Natural killer cell (primary cell): ENCODE measurements at regions of chr6 and their contacts with region 1.

Region 1: GRCh38 chr6:88780714-88781389 is 182.6 kb downstream of the RNGTT start:
- DNase-seq: peak in 1 of 2 donors; percentile 81
- ATAC-seq: peak; percentile 86 to 96 (median 89)
- H3K4me3 ChIP-seq: no peak overlapping the region
- H3K4me3 Mint-ChIP-seq: no peak overlapping the region
- H3K27ac ChIP-seq: no peak overlapping the region
- H3K27ac Mint-ChIP-seq: no peak overlapping the region
- H3K4me1 ChIP-seq: no peaks in the 10 kb centered on the region
- H3K4me1 Mint-ChIP-seq: peaks cover 5% of the 10 kb centered on the region in 2 donors
- H3K27me3 ChIP-seq: no peaks in the 10 kb centered on the region
- H3K27me3 Mint-ChIP-seq: no peaks in the 10 kb centered on the region
- CTCF ChIP-seq: peak; percentile 86

Region 2: DNA sequence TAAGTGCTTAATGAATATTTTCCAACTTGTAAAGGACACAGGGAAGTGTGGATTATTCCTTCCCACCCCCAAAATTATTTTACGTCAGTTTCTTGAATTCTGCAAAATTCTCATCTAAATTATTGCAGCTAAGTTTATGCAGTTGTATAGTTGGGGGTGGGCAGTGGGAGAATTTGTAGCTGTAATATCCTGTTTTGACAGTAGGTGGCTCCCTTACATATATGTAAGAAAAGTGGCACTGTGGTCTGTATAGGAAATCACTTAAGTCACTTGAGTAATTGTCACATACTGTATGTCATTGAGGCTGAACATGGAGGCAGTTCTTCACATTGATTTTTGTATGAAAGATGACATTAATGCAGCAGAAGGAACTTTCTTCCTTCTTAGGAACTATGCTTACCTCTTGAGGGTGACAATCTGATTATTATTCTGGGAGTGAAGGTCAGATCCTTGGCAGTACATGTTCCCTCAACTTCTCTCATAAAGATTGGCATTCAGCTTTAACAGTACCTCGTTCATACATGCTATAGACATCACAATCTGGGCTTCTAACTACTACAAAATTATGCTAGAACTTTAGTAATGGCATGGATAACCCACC is 1387.7 kb before region 1 on chr6:
- intact Hi-C with region 1: loop called (anchors 2 kb)
- DNase-seq: peak; percentile 20 to 83
- ATAC-seq: peak; percentile 94 to 100 (median 100)
- H3K4me3 ChIP-seq: no peak overlapping the region
- H3K4me3 Mint-ChIP-seq: no peak overlapping the region
- H3K27ac ChIP-seq: no peak overlapping the region
- H3K27ac Mint-ChIP-seq: peak overlapping the region in 1 of 2 donors; percentile 45
- H3K4me1 ChIP-seq: no peaks in the 10 kb centered on the region
- H3K4me1 Mint-ChIP-seq: peaks cover 5% of the 10 kb centered on the region in 2 donors
- H3K27me3 ChIP-seq: no peaks in the 10 kb centered on the region
- H3K27me3 Mint-ChIP-seq: no peaks in the 10 kb centered on the region
- CTCF ChIP-seq: peak; percentile 72

Region 3: DNA sequence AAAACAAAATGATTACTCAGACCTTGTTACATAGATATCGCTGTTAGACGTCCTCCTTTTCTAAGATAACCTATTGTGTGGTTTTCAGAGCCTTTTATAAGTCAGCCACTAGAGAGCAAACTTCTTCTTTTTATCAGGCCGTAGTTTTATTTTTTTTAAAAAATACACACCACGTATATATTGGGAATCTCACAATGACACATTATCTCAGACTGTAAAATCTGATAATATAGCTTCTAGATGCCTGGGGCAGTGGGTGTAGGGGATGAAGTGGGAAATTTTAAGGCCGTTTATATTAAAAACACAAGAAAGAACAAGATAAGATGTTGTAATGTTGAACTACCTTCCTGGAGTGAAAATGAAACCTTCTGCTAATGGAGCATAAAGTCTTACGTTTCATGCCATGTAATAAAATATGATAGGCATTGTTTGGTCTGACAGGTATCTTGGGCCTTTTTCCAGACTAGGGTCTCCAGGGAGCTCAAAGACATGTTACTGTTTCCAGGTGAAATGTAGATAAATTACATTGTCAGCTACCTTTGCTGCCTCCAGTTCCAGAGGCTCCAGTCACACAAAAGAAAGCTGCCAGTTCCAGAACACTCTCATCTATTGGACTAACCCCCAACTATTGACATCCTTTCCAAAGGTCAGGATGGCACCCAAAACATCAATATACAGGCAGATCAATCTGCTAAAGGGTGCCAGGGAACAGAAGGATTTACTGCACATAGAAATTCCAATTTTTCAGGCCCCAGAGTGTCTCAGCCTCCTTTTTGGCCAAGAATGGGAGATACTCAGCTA is 948.6 kb before region 1 on chr6:
- intact Hi-C with region 1: loop called (anchors 2 kb)
- DNase-seq: peak in 1 of 2 donors; percentile 53
- ATAC-seq: peak; percentile 52 to 73 (median 67)
- H3K4me3 ChIP-seq: peak overlapping the region; percentile 47
- H3K4me3 Mint-ChIP-seq: peak overlapping the region; percentile 96
- H3K27ac ChIP-seq: peak overlapping the region; percentile 59
- H3K27ac Mint-ChIP-seq: peak overlapping the region; percentile 78 to 86
- H3K4me1 ChIP-seq: peaks cover 5% of the 10 kb centered on the region
- H3K4me1 Mint-ChIP-seq: peaks cover 0 to 10% of the 10 kb centered on the region in 2 donors
- H3K27me3 ChIP-seq: no peaks in the 10 kb centered on the region
- H3K27me3 Mint-ChIP-seq: peaks cover 4 to 9% of the 10 kb centered on the region in 2 donors
- CTCF ChIP-seq: peak; percentile 53

Region 4: GRCh38 chr6:87929843-87930288 is 851.0 kb before region 1 on chr6:
- intact Hi-C with region 1: loop called (anchors 5 kb)
- DNase-seq: peak; percentile 19 to 72
- ATAC-seq: peak; percentile 48 to 57 (median 56)
- H3K4me3 ChIP-seq: no peak overlapping the region
- H3K4me3 Mint-ChIP-seq: no peak overlapping the region
- H3K27ac ChIP-seq: no peak overlapping the region
- H3K27ac Mint-ChIP-seq: no peak overlapping the region
- H3K4me1 ChIP-seq: peaks cover 26% of the 10 kb centered on the region
- H3K4me1 Mint-ChIP-seq: peaks cover 17 to 19% of the 10 kb centered on the region in 2 donors
- H3K27me3 ChIP-seq: no peaks in the 10 kb centered on the region
- H3K27me3 Mint-ChIP-seq: peaks cover 17 to 24% of the 10 kb centered on the region in 2 donors
- CTCF ChIP-seq: peak; percentile 66